ENCODE measurements at regions of chr9 and their contacts with region 1.

Region 1: DNA sequence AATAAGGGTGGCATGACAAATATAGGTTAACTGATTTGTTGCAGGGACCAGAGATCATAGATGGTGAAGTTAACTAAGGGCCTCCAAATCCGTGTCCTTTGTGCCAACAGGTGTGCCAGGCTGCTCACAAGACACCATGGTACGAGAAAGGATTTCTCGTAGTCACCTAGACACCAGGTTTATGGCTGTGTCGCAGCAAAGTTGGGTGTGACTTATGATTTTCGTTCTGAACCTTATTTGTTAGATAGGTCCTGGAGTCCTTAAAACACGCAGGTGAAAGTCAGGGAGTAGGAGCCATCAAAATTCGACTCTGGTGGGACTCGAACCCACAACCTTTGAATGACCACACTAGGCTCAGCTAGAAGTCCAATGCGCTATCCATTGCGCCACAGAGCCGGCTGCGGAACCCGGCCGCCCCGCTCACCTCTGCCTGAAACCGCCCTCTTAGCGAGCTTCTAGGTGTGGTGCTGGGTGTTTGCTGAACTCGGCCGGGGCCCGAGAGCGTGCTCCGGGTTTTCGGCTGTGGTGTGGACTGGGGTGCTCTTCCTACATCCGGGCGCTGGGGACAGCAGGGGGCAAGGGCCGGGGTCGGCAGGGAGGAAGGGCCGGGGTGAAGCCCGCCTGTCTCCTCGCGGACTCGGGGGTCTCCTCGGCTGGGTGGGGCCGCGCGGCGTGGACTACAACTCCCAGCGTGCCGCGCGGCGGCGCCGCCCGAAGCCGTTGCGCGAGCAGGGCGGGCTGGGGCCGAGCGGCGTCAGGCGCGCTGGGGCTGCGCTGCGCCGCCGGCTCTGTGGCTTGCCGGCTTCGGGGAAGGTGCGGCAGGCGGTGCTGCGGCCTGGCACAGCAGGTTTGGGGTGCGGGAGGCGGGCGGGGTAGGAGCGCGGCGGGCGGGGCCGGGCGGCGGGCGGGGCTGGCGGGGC is at the start of gene SLC27A4:
- DNase-seq: peak; percentile 96
- H3K4me3 Mint-ChIP-seq: peak within 1 kb of the TSS; percentile 88
- H3K27ac Mint-ChIP-seq: peak within 1 kb of the TSS; percentile 92
- H3K4me1 Mint-ChIP-seq: peaks cover 6% of the 10 kb centered on the region
- H3K27me3 Mint-ChIP-seq: no peaks in the 10 kb centered on the region
- total RNA-seq, gene SLC27A4: 37.0 and 37.9 TPM in 2 replicates

Region 2: GRCh38 chr9:128203024-128203706 is 136.9 kb before region 1 on chr9 and contains the start of gene DNM1:
- intact Hi-C with region 1: loop called (anchors 5 kb)
- DNase-seq: peak; percentile 95
- H3K4me3 Mint-ChIP-seq: peak within 1 kb of the TSS; percentile 72
- H3K27ac Mint-ChIP-seq: peak within 1 kb of the TSS; percentile 64
- H3K4me1 Mint-ChIP-seq: peaks cover 16% of the 10 kb centered on the region
- H3K27me3 Mint-ChIP-seq: peaks cover 32% of the 10 kb centered on the region
- total RNA-seq, gene DNM1: 0.95 and 1.5 TPM in 2 replicates

Region 3: GRCh38 chr9:128275996-128276573 is 63.9 kb before region 1 on chr9 and contains the starts of genes GOLGA2 and SWI5:
- intact Hi-C with region 1: loop called (anchors 1 kb)
- DNase-seq: peak; percentile 100
- H3K4me3 Mint-ChIP-seq: peak within 1 kb of the TSS; percentile 93
- H3K27ac Mint-ChIP-seq: peak within 1 kb of the TSS; percentile 95
- H3K4me1 Mint-ChIP-seq: peaks cover 45% of the 10 kb centered on the region
- H3K27me3 Mint-ChIP-seq: peaks cover 3% of the 10 kb centered on the region
- total RNA-seq, gene GOLGA2: 44.1 and 50.4 TPM in 2 replicates
- total RNA-seq, gene SWI5: 13.6 and 14.3 TPM in 2 replicates

Region 4: DNA sequence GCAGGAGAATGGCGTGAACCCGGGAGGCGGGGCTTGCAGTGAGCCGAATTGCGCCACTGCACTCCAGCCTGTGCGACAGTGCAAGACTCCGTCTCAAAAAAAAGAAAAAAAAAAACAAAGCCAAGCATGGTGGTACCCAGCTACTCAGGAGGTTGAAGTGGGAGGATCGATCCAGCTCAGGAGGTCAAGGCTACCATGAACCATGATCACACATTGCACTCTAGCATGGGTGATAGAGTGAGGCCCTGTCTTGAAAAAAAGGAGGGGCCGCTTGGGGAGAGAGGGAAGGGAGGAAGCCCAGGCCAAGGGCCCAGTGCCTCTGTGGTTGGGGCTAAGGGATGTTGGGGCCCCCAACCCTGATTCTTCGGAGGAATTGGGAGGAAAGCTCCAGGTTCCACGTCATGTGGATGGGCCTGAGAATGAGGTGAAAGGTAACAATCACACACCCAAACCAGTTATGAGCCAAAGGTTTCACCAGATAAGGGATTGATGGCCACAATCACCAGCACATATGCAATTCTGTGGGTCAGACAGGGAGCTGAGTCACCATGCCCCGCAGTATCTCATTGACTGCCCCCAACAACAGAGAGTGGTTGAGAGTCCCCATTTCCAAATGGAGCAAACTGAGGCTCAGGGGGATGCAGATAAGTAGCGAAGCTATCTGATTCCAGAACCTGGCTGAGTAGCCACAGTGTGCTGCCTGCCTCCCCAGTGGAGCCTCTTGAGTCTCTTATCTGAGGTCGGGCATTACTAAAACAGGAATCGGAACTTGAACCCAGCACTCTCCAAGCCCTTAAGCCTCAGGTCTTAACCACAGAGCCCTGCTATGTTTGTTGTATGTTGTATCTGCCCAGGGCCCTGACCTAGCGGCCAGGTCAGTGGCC is 43.5 kb before region 1 on chr9:
- intact Hi-C with region 1: loop called (anchors 1 kb)
- DNase-seq: no peak
- H3K4me3 Mint-ChIP-seq: no peak overlapping the region
- H3K27ac Mint-ChIP-seq: no peak overlapping the region
- H3K4me1 Mint-ChIP-seq: no peaks in the 10 kb centered on the region
- H3K27me3 Mint-ChIP-seq: no peaks in the 10 kb centered on the region

Region 5: DNA sequence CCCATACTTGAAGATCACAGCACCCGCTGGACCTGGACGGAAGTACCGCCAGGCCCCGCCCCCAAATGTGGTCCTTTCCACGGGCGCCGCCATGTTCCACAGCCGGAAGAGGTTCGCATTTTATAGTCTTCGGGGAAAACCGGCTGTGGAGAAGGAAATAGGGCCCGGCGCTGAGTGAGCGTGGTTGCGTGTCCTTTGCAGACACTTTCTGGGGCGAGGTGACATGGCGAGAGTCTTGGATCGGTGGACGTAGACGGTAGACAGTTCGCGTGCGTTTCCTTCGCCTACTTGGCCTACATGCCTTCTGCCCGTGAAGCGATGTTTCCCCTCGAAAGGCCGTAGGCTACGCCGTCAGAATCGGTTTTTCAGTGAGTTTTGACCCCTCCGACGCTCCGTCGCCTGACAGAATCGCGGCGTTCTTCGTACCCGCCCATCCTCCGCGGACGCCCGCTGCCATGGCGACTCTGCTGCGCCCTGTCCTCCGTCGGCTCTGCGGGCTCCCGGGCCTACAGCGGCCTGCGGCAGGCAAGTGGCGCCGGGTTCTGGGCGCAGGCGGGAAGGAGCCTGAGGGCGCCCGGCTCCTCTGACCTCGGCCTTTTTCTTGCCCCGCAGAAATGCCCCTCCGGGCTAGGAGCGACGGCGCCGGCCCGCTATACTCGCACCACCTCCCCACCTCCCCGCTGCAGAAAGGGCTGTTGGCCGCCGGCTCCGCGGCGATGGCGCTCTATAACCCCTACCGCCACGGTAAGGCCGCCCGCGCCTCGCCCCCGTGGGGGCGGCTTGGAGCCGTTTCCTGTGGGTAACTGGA is 17.4 kb before region 1 on chr9 and contains the starts of genes COQ4 and TRUB2:
- intact Hi-C with region 1: loop called (anchors 1 kb)
- DNase-seq: peak; percentile 98
- H3K4me3 Mint-ChIP-seq: peak within 1 kb of the TSS; percentile 91
- H3K27ac Mint-ChIP-seq: peak within 1 kb of the TSS; percentile 97
- H3K4me1 Mint-ChIP-seq: peaks cover 9% of the 10 kb centered on the region
- H3K27me3 Mint-ChIP-seq: no peaks in the 10 kb centered on the region
- total RNA-seq, gene COQ4: 60.7 and 61.4 TPM in 2 replicates
- total RNA-seq, gene TRUB2: 40.4 and 43.0 TPM in 2 replicates

Region 6: DNA sequence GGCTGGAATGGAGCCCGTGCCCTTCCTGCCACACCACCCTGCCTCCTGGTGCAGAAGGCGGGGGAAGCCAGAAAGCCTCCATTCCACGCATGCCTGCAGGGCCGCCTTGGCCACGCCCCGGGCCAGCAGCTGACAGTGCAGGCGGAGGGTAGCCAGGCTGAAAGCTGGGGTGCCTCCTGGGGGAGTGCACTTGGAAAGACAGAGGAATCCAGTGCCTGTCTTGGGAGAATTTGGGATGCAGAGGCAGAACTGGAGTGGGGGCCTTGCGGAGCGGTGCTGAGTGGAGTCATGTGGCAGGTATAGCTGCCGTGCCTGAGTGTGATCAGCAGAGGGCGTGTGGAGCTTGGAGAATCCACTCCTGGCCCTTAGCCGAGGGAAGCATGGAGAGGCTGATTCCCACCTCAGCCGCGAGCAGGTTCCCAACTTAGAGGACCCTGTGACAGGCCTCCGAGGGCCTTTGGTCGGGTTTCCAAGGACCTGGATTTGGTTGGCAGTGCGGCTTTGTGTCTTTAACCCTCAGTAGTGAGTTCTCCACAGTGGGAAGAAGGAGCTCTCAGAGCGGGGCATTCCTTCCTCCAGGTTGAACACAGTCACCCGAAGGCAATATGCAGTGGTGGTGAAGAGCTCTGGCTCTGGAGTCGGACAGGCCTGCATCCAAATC is 22.1 kb after region 1 on chr9:
- intact Hi-C with region 1: loop called (anchors 2 kb)
- DNase-seq: peak; percentile 91
- H3K4me3 Mint-ChIP-seq: peak overlapping the region; percentile 85
- H3K27ac Mint-ChIP-seq: peak overlapping the region; percentile 79
- H3K4me1 Mint-ChIP-seq: peaks cover 16% of the 10 kb centered on the region
- H3K27me3 Mint-ChIP-seq: no peaks in the 10 kb centered on the region

Region 7: GRCh38 chr9:128798896-128799295 is 458.9 kb after region 1 on chr9:
- intact Hi-C with region 1: no loop called
- DNase-seq: peak; percentile 51
- H3K4me3 Mint-ChIP-seq: no peak overlapping the region
- H3K27ac Mint-ChIP-seq: no peak overlapping the region
- H3K4me1 Mint-ChIP-seq: no peaks in the 10 kb centered on the region
- H3K27me3 Mint-ChIP-seq: no peaks in the 10 kb centered on the region

Measured in activated CD4-positive, alpha-beta T cell treated with anti-CD3 and anti-CD28 coated beads, Interleukin-2, amount 10 ng/mL, durations not matched to agents 24 days and 14 days (primary cell).